Activated CD4-positive, alpha-beta memory T cell treated with anti-CD3 and anti-CD28 coated beads for 36 hours (primary cell): ENCODE measurements at regions of chr17 and their contacts with region 1.

Region 1: GRCh38 chr17:51153210-51154072 is at the start of gene NME1:
- DNase-seq: peak; percentile 99
- H3K4me3 Mint-ChIP-seq: no peak within 1 kb of the TSS
- H3K27ac Mint-ChIP-seq: no peak within 1 kb of the TSS
- H3K4me1 Mint-ChIP-seq: peaks cover 19% of the 10 kb centered on the region
- H3K27me3 Mint-ChIP-seq: no peaks in the 10 kb centered on the region
- total RNA-seq, gene NME1: 235 to 238 TPM

Region 2: DNA sequence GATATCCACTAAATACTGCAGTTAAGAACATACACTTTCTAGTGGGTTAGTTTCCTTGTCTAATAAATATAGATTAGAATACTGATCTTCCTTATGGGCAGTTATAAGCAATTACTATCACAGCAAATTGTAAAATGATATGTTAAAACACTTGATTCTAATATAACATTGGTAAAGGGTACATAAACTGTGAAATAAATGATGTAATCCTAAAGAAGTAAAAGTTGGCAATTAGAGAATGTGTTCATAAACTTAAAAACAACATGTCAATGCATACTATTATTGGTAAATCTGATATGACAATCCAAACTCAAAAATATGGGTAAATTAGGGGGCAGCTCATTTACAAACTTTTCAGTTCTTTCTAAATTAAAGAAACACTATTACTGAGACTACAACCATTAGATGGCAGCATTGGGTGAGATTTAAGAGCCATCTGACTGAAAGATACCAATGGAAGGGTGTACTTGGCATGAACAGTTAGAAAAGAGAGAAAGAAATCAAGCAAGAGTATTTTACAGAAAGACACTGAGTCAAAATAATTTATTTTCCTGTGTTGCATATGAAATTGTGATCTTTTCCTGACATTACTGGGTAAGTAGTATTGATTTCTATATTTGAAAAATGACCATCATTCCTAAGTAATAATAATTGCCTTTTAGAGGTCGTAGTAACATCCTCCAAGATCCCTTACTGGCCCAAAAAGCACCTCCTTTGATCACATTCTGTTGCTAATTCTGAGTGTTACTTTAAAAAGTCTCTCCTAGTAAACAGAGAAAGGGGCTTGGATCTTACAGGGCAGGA is 152.4 kb before region 1 on chr17:
- CTCF ChIA-PET with region 1: interaction called, 124 read pairs
- POLR2A ChIA-PET with region 1: interaction called, 7 read pairs
- intact Hi-C with region 1: loop called (anchors 1 kb)
- DNase-seq: no peak
- H3K4me3 Mint-ChIP-seq: no peak overlapping the region
- H3K27ac Mint-ChIP-seq: no peak overlapping the region
- H3K4me1 Mint-ChIP-seq: no peaks in the 10 kb centered on the region
- H3K27me3 Mint-ChIP-seq: no peaks in the 10 kb centered on the region

Region 3: GRCh38 chr17:51029568-51030463 is 123.6 kb before region 1 on chr17:
- CTCF ChIA-PET with region 1: interaction called, 16 read pairs
- POLR2A ChIA-PET with region 1: no interaction called
- intact Hi-C with region 1: loop called (anchors 1 kb)
- DNase-seq: no peak
- H3K4me3 Mint-ChIP-seq: peak overlapping the region; percentile 41
- H3K27ac Mint-ChIP-seq: peak overlapping the region; percentile 71
- H3K4me1 Mint-ChIP-seq: peaks cover 28% of the 10 kb centered on the region
- H3K27me3 Mint-ChIP-seq: no peaks in the 10 kb centered on the region

Region 4: GRCh38 chr17:51056813-51057510 is 96.5 kb before region 1 on chr17:
- CTCF ChIA-PET with region 1: interaction called, 14 read pairs
- POLR2A ChIA-PET with region 1: no interaction called
- intact Hi-C with region 1: no loop called
- DNase-seq: no peak
- H3K4me3 Mint-ChIP-seq: no peak overlapping the region
- H3K27ac Mint-ChIP-seq: no peak overlapping the region
- H3K4me1 Mint-ChIP-seq: peaks cover 13% of the 10 kb centered on the region
- H3K27me3 Mint-ChIP-seq: no peaks in the 10 kb centered on the region

Region 5: DNA sequence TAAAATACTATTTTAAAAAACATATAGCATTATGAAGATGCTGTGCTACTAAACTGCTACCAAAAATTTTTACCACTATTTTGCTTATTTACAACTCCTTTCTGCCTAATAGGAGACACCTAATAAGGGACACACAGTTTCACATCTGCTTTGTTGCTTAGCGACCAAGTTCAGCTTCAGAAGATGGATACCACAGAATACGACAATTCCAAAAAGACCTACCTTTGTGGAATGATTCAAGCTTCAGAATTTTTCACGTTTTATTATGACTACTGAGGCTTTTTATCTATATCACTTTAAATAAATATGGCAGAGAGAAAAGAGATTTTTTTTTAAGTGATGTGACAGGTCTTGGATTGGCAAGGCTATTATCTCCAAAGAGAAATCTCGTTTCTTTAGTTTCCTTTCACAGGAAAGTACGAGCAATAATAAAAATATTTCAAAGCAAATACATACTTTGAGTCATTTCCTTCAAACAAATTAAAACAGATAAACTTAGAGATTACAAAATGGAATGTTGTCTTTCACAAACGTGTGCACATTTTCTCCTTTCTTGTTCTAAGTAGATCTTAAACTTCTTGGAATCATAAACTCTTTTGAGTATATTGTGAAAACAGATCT is 68.1 kb before region 1 on chr17:
- CTCF ChIA-PET with region 1: interaction called, 9 read pairs
- POLR2A ChIA-PET with region 1: no interaction called
- intact Hi-C with region 1: loop called (anchors 2 kb)
- DNase-seq: no peak
- H3K4me3 Mint-ChIP-seq: no peak overlapping the region
- H3K27ac Mint-ChIP-seq: peak overlapping the region; percentile 51
- H3K4me1 Mint-ChIP-seq: peaks cover 27% of the 10 kb centered on the region
- H3K27me3 Mint-ChIP-seq: no peaks in the 10 kb centered on the region

Region 6: DNA sequence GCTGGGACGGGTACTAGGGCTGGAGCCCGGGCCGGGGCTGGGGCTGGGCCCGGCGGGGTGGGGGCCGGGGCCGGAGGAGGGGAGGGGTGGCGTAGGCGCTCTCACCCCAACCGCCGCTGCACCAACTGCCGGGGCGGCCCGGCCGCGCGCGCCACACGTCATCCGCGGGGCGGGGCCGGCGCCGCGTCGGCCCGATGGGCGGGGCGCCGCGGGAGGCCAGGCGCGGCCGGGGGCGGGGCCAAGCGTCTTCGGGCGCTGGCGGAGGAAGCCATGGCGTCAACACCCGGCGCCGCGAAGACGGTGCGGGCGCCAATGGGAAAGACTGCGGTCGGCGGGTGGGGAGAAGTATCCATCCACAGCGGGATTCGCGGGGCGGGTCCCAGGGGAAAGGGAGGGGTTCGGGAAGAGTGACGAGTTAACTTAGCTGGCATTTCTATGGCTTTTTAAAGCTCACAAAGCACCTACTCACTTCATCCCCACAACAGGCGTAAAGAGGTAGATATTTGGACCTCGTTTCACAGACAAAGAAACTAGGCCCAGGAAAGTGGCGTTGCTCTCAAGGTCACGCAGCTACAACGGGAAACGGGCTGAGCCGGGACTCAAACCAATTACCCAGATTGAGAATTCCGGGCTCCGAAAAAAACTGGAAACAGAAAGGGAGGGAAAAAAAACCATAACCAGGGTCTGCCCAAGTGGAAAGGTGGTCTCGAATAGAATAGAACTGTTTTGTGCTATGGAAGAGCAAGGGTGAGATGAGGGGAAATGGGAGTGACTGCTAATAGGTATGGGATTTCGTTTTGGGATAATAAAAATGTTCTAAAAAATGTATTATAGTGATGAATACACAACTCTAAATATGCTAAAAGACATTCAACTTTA is 32.5 kb before region 1 on chr17 and contains the start of gene SPAG9:
- CTCF ChIA-PET with region 1: interaction called, 31 read pairs
- POLR2A ChIA-PET with region 1: interaction called, 16 read pairs
- intact Hi-C with region 1: loop called (anchors 1 kb)
- DNase-seq: peak; percentile 94
- H3K4me3 Mint-ChIP-seq: peak within 1 kb of the TSS; percentile 94
- H3K27ac Mint-ChIP-seq: peak within 1 kb of the TSS; percentile 98
- H3K4me1 Mint-ChIP-seq: peaks cover 43% of the 10 kb centered on the region
- H3K27me3 Mint-ChIP-seq: no peaks in the 10 kb centered on the region
- total RNA-seq, gene SPAG9: 58.0 to 58.7 TPM

Region 7: GRCh38 chr17:51166197-51166986 is 13.0 kb after region 1 on chr17 and contains the start of gene NME2:
- CTCF ChIA-PET with region 1: interaction called, 41 read pairs
- POLR2A ChIA-PET with region 1: interaction called, 16 read pairs
- intact Hi-C with region 1: loop called (anchors 1 kb)
- DNase-seq: peak; percentile 77
- H3K4me3 Mint-ChIP-seq: peak within 1 kb of the TSS; percentile 82
- H3K27ac Mint-ChIP-seq: peak within 1 kb of the TSS; percentile 89
- H3K4me1 Mint-ChIP-seq: peaks cover 29% of the 10 kb centered on the region
- H3K27me3 Mint-ChIP-seq: no peaks in the 10 kb centered on the region
- total RNA-seq, gene NME2: 790 to 814 TPM